Ascending aorta (tissue), 2 donors: ENCODE measurements at regions of chr1 and their contacts with region 1.

Region 1: GRCh38 chr1:42766741-42767509 is at the starts of genes C1orf50 and P3H1:
- DNase-seq: peak; percentile 99 to 100
- H3K4me3 ChIP-seq: peak within 1 kb of the TSS; percentile 86 to 88
- H3K27ac ChIP-seq: peak within 1 kb of the TSS; percentile 84 to 91
- H3K4me1 ChIP-seq: peaks cover 0 to 19% of the 10 kb centered on the region in 2 donors
- H3K27me3 ChIP-seq: no peaks in the 10 kb centered on the region
- CTCF ChIP-seq: no peak
- total RNA-seq, gene C1orf50: 0.64 TPM
- total RNA-seq, gene P3H1: 72.2 TPM

Region 2: DNA sequence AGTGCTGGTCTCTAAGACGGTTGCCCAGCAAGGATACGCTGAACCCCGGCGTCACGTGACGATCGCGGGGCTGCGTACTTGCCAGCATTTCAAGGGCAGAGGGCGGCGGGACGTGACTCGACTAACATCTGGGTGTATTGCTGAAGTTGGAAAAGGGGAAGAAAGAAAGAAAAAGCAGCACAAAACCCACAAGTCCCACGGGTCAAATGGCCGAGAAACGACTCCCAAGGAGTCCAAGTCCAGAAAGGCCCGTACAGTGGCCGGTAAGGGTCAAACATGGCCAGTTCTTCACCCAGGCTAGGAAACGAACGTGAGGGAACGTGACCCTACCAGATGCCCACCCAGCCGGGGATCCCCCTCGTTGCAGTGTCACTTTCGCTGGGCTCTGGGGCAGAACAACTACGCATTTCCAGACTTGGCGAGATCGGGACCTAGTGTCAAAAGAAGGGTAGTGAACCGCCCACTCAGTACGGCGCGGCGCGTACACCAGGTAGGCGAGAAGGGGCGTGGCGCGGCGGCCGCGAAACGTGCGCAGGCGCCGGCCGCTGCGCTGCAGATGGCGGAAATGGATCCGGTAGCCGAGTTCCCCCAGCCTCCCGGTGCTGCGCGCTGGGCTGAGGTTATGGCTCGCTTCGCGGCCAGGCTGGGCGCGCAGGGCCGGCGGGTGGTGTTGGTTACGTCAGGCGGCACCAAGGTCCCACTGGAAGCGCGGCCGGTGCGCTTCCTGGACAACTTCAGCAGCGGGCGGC is 310.7 kb before region 1 on chr1 and contains the starts of genes PPCS and ZMYND12:
- intact Hi-C with region 1: loop called (anchors 2 kb)
- DNase-seq: peak; percentile 59 to 92
- H3K4me3 ChIP-seq: peak within 1 kb of the TSS; percentile 81 to 89
- H3K27ac ChIP-seq: peak within 1 kb of the TSS; percentile 84 to 88
- H3K4me1 ChIP-seq: peaks cover 0 to 12% of the 10 kb centered on the region in 2 donors
- H3K27me3 ChIP-seq: no peaks in the 10 kb centered on the region
- CTCF ChIP-seq: peak in 1 of 3 experiments; percentile 14
- total RNA-seq, gene PPCS: 13.6 TPM
- total RNA-seq, gene ZMYND12: not detected

Region 3: DNA sequence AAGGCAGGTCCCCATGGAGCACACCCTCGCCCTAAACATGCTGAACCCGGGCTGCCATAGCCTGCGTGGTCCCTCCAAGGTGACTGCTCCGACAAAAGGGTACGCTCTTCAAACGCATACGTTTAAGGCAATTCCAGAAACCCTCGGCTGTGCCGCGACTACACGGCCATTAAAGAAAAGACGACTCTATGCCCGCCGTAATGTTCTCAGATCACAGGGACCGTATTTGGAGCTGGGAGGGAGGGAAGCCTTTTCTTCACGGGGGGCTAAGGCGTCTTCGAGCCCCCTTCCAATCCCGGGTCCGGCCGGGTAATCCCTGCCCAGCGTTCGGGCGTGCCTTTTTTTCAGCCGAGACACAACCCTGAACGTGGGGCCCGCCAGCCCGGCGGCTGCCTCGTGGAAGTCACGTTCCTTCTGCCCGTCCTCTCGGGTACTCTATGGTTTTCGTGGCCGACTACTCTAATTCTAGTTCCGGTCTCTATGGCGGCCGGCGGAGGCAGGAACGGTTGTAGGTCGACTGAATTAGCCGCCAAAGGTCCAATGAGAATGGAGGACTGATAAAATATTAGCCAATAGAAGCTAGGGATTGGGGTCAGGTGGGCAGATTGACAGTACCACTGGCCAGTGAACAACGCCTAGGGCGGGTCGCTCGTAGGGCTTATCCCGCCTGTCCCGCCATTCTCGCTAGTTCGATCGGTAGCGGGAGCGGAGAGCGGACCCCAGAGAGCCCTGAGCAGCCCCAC is 85.0 kb before region 1 on chr1 and contains the start of gene YBX1:
- intact Hi-C with region 1: loop called (anchors 2 kb)
- DNase-seq: peak; percentile 93 to 98
- H3K4me3 ChIP-seq: peak within 1 kb of the TSS; percentile 96
- H3K27ac ChIP-seq: peak within 1 kb of the TSS; percentile 84 to 95
- H3K4me1 ChIP-seq: peaks cover 9 to 40% of the 10 kb centered on the region in 2 donors
- H3K27me3 ChIP-seq: no peaks in the 10 kb centered on the region
- CTCF ChIP-seq: no peak
- total RNA-seq, gene YBX1: 356 TPM

Region 4: DNA sequence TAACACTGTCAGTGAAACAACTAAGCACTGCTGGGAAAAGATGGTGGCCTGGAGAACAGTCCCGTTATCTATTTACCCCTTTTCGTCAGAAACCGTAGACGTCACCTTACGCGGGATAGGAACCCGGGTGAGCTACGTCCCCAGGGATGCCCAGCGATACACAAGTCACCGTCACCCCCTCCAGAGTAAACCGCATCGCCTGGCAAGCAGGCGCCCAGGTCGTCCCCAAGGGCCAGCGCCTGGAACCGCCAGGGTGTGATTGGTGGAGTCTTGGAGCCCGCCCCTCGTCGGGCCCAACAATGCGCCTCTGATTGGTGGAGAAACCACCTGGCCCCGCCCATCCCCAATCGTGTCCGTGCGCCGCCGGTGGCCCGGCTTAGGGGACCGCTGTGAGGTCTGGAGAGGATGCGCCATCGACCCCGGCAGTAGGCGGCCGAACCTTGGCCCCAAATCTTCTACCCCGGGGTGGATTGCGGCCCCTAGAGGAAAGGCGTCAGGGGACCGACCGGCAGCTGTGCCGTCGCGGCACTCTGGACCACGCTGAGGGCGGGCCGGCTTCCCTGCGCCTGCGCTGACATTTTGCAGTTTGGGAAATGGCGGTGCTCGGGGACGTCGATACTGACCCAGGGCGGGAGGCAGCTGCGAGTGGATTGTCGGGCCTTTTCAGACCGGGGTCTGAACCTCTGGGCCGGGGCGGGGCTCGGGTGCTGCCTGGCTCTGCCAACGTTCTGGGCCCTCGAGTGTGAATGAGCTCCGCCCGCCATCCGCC is 157.3 kb after region 1 on chr1:
- intact Hi-C with region 1: loop called (anchors 5 kb)
- DNase-seq: peak; percentile 85 to 97
- H3K4me3 ChIP-seq: peak overlapping the region; percentile 81 to 89
- H3K27ac ChIP-seq: peak overlapping the region; percentile 97 to 98
- H3K4me1 ChIP-seq: peaks cover 3 to 9% of the 10 kb centered on the region in 2 donors
- H3K27me3 ChIP-seq: no peaks in the 10 kb centered on the region
- CTCF ChIP-seq: no peak

Region 5: GRCh38 chr1:43101061-43101460 is 334.1 kb after region 1 on chr1:
- intact Hi-C with region 1: no loop called
- DNase-seq: no peak
- H3K4me3 ChIP-seq: no peak overlapping the region
- H3K27ac ChIP-seq: no peak overlapping the region
- H3K4me1 ChIP-seq: no peaks in the 10 kb centered on the region
- H3K27me3 ChIP-seq: no peaks in the 10 kb centered on the region
- CTCF ChIP-seq: no peak

Region 6: DNA sequence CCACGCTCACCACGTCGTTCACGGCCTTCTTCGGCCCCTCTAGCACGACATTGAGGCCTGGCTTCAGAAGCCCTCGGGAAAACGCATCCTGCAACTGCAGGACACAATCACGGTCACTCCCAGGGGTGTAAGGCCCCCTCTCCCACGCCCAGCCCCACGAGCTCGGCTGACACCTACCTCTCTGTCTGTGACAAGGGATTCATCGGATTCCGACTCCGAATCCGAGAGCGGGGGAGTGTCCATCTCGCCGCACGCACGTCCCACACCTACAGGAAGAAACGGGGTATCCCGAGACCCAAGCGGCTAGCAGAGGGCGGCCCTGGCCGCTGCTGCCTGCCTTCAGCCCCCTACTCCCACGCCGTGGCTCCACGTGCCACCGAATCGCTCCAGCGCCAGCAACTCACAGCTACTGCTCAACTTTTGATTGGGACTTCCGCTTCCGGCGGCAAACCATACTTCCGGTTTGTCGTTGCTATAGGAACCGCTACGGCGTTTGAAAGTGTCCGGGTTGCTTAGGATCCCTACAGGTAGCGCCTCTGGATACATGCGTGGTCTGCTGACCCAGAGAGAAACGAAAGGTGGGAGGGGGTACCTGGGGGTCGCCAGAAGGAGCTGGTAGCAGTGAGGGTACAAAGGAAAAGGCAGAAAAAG is 405.1 kb after region 1 on chr1 and contains the starts of genes CFAP57 and EBNA1BP2:
- intact Hi-C with region 1: loop called (anchors 5 kb)
- DNase-seq: peak; percentile 76 to 96
- H3K4me3 ChIP-seq: peak within 1 kb of the TSS; percentile 69 to 92
- H3K27ac ChIP-seq: peak within 1 kb of the TSS; percentile 46 to 51
- H3K4me1 ChIP-seq: peaks cover 6 to 9% of the 10 kb centered on the region in 2 donors
- H3K27me3 ChIP-seq: no peaks in the 10 kb centered on the region
- CTCF ChIP-seq: no peak
- total RNA-seq, gene CFAP57: not detected
- total RNA-seq, gene EBNA1BP2: 22.1 TPM